CD8-positive, alpha-beta T cell (primary cell): ENCODE measurements at regions of chr2 and their contacts with region 1.

Region 1: DNA sequence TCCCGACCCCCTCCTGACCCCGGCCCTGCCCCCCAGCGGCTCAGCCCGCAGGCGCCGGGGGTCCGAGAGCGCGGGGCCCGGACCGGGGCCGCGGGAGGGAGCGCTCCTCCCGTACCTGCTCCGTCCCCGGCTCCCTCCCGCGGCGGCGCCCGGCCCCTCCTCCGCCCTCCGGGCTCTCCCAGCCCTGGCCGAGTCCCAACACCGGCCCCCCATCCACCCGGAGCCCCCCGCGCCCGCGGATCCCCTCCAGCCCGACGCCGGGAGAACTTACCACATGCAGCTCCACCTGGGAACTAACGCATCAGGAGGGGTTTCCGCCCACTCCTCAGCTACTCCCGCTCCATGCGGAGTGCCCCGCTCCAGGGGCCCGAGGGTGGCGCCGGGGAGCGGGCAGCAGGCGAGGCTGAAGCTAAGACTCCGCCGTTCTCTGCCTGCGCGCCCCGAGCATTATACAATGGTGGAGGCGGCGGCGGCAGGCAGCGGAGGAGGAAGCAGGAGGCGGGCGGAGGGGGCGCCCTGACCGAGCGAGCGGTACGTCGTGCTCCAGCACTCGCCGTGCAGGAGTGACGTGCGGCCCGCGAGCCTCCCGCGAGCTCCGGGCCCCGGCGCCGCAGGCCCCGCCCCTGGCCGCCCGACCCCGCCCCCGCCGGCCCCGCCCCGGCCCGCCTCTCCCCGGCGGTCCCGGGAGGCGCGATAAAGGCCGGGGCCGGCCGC is at the start of gene SERTAD2:
- DNase-seq: peak; percentile 72 to 95 (median 87)
- ATAC-seq: peak; percentile 82
- H3K4me3 ChIP-seq: peak within 1 kb of the TSS; percentile 84 to 85
- H3K4me3 Mint-ChIP-seq: peak within 1 kb of the TSS; percentile 94
- H3K27ac ChIP-seq: peak within 1 kb of the TSS; percentile 86 to 90
- H3K27ac Mint-ChIP-seq: peak within 1 kb of the TSS; percentile 97
- H3K4me1 ChIP-seq: peaks cover 63% of the 10 kb centered on the region
- H3K4me1 Mint-ChIP-seq: peaks cover 78% of the 10 kb centered on the region
- H3K27me3 ChIP-seq: no peaks in the 10 kb centered on the region
- H3K27me3 Mint-ChIP-seq: no peaks in the 10 kb centered on the region
- CTCF ChIP-seq: no peak
- total RNA-seq, gene SERTAD2: 47.5 to 48.8 TPM

Region 2: DNA sequence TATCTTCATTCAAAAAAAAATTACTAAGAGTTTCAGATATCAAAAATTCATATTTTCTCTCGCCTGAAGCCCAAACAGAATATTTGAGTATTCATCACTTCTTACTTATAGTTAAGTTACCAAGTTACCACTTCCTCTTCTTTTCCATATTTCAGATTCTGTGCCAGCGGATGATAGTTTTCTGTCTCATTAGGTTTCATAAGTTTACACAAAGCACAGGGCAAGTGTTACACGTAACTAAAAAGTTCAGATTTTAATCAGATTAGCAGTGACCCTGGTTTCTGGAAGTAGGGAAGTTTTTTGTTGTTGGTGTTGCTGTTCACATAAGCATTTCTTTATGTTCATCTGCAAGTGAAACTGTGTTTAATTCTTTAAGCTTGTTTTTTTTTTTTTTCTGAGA is 119.1 kb before region 1 on chr2:
- CTCF ChIA-PET with region 1: no interaction called
- POLR2A ChIA-PET with region 1: no interaction called
- intact Hi-C with region 1: no loop called
- DNase-seq: peak in 1 of 9 experiments; percentile 7
- ATAC-seq: no peak
- H3K4me3 ChIP-seq: no peak overlapping the region
- H3K4me3 Mint-ChIP-seq: peak overlapping the region; percentile 12
- H3K27ac ChIP-seq: no peak overlapping the region
- H3K27ac Mint-ChIP-seq: no peak overlapping the region
- H3K4me1 ChIP-seq: peaks cover 19% of the 10 kb centered on the region
- H3K4me1 Mint-ChIP-seq: peaks cover 59% of the 10 kb centered on the region
- H3K27me3 ChIP-seq: no peaks in the 10 kb centered on the region
- H3K27me3 Mint-ChIP-seq: no peaks in the 10 kb centered on the region
- CTCF ChIP-seq: no peak

Region 3: GRCh38 chr2:64586883-64587481 is 66.5 kb before region 1 on chr2:
- CTCF ChIA-PET with region 1: interaction called, 13 read pairs
- POLR2A ChIA-PET with region 1: no interaction called
- intact Hi-C with region 1: no loop called
- DNase-seq: peak in 2 of 9 experiments; percentile 57 to 70
- ATAC-seq: peak; percentile 75
- H3K4me3 ChIP-seq: no peak overlapping the region
- H3K4me3 Mint-ChIP-seq: no peak overlapping the region
- H3K27ac ChIP-seq: no peak overlapping the region
- H3K27ac Mint-ChIP-seq: no peak overlapping the region
- H3K4me1 ChIP-seq: no peaks in the 10 kb centered on the region
- H3K4me1 Mint-ChIP-seq: no peaks in the 10 kb centered on the region
- H3K27me3 ChIP-seq: no peaks in the 10 kb centered on the region
- H3K27me3 Mint-ChIP-seq: no peaks in the 10 kb centered on the region
- CTCF ChIP-seq: peak; percentile 87

Region 4: DNA sequence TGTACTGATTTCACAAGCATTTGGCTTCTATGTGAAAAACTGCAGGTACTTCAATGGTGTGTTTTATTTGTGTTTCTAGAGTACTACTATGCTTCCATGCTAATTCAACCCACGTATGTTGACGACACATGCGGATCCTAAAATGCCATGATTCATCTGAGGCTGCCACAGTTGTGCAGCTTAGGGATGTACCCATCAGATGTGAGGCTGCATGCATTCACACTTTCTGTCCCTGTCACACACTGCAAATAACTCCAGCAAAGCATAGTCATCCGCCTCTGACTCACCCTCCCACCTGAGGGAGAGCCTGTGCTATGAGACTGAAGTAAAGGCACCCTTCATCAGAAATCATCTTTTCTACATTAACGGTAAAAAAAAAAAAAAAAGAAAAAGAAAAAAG is 22.4 kb after region 1 on chr2:
- CTCF ChIA-PET with region 1: interaction called, 8 read pairs
- POLR2A ChIA-PET with region 1: interaction called, 29 read pairs
- intact Hi-C with region 1: no loop called
- DNase-seq: peak in 3 of 9 experiments; percentile 22 to 59 (median 42)
- ATAC-seq: peak; percentile 92
- H3K4me3 ChIP-seq: no peak overlapping the region
- H3K4me3 Mint-ChIP-seq: no peak overlapping the region
- H3K27ac ChIP-seq: no peak overlapping the region
- H3K27ac Mint-ChIP-seq: peak overlapping the region; percentile 37
- H3K4me1 ChIP-seq: peaks cover 25% of the 10 kb centered on the region
- H3K4me1 Mint-ChIP-seq: peaks cover 56% of the 10 kb centered on the region
- H3K27me3 ChIP-seq: no peaks in the 10 kb centered on the region
- H3K27me3 Mint-ChIP-seq: no peaks in the 10 kb centered on the region
- CTCF ChIP-seq: no peak

Region 5: DNA sequence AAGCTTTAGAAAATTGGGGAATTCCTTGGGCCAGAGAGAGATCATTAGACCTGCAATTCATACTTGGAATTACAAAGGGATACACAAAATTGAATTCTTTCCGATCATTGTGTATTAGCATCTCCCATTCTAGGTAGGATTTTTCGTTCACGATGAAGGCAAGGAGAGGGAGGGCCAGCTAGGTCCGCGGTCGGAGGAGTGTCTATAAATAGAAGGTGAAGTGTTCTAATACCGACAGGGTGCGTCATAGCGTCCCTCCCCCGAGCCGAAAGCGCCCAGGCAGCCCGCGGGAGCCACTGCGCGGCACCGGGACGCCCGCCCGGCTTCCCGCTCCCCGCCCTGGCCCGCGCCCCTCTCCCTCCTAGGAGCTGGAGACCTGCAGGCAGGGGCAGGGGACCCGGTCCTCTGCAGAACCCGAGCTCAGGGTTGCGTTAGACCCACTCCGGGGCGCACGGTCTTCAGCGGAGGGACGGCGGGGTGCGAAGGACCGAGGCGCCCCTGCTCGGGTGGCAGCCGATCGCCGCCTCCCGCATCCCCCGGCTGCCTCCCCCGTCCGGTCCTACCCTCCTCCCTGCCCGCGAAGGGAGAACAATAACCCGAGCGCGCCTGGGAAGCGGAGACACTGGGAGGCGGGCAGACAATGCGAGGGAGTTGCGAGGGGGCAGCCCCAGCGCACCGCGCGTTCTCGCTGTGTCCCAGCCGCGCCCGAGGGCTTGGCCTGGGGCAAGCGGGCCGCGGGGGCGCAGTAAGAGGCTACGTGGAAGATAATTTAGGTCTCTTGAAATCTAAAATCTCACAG is 114.4 kb after region 1 on chr2:
- CTCF ChIA-PET with region 1: interaction called, 12 read pairs
- POLR2A ChIA-PET with region 1: interaction called, 18 read pairs
- intact Hi-C with region 1: loop called in 1 of 2 experiments (anchors 2 kb)
- DNase-seq: peak; percentile 45 to 90 (median 74)
- ATAC-seq: peak; percentile 74
- H3K4me3 ChIP-seq: peak overlapping the region; percentile 66 to 68
- H3K4me3 Mint-ChIP-seq: peak overlapping the region; percentile 92
- H3K27ac ChIP-seq: peak overlapping the region; percentile 61 to 88
- H3K27ac Mint-ChIP-seq: peak overlapping the region; percentile 93
- H3K4me1 ChIP-seq: peaks cover 11% of the 10 kb centered on the region
- H3K4me1 Mint-ChIP-seq: peaks cover 16% of the 10 kb centered on the region
- H3K27me3 ChIP-seq: no peaks in the 10 kb centered on the region
- H3K27me3 Mint-ChIP-seq: no peaks in the 10 kb centered on the region
- CTCF ChIP-seq: no peak

Region 6: GRCh38 chr2:64873472-64873924 is 220.0 kb after region 1 on chr2:
- CTCF ChIA-PET with region 1: interaction called, 11 read pairs
- POLR2A ChIA-PET with region 1: no interaction called
- intact Hi-C with region 1: no loop called
- DNase-seq: peak; percentile 59 to 88 (median 78)
- ATAC-seq: peak; percentile 99
- H3K4me3 ChIP-seq: peak overlapping the region in 1 of 2 experiments; percentile 13
- H3K4me3 Mint-ChIP-seq: peak overlapping the region; percentile 20
- H3K27ac ChIP-seq: no peak overlapping the region
- H3K27ac Mint-ChIP-seq: no peak overlapping the region
- H3K4me1 ChIP-seq: peaks cover 4% of the 10 kb centered on the region
- H3K4me1 Mint-ChIP-seq: peaks cover 6% of the 10 kb centered on the region
- H3K27me3 ChIP-seq: no peaks in the 10 kb centered on the region
- H3K27me3 Mint-ChIP-seq: peaks cover 4% of the 10 kb centered on the region
- CTCF ChIP-seq: peak; percentile 88

Region 7: GRCh38 chr2:65227425-65228262 is 574.1 kb after region 1 on chr2 and contains the start of gene ACTR2:
- CTCF ChIA-PET with region 1: no interaction called
- POLR2A ChIA-PET with region 1: no interaction called
- intact Hi-C with region 1: loop called in 1 of 2 experiments (anchors 5 kb)
- DNase-seq: peak; percentile 87 to 98 (median 94)
- ATAC-seq: peak; percentile 94
- H3K4me3 ChIP-seq: peak within 1 kb of the TSS; percentile 74 to 89
- H3K4me3 Mint-ChIP-seq: peak within 1 kb of the TSS; percentile 99
- H3K27ac ChIP-seq: peak within 1 kb of the TSS; percentile 94 to 98
- H3K27ac Mint-ChIP-seq: peak within 1 kb of the TSS; percentile 99
- H3K4me1 ChIP-seq: peaks cover 43% of the 10 kb centered on the region
- H3K4me1 Mint-ChIP-seq: peaks cover 47% of the 10 kb centered on the region
- H3K27me3 ChIP-seq: no peaks in the 10 kb centered on the region
- H3K27me3 Mint-ChIP-seq: no peaks in the 10 kb centered on the region
- CTCF ChIP-seq: no peak
- total RNA-seq, gene ACTR2: 101 to 117 TPM